ENCODE measurements at regions of chr16 and their contacts with region 1.

Region 1: GRCh38 chr16:30984669-30985400 is at the start of gene HSD3B7:
- DNase-seq: peak; percentile 96
- H3K4me3 ChIP-seq: peak within 1 kb of the TSS; percentile 30 to 53 (median 50)
- H3K27ac ChIP-seq: peak within 1 kb of the TSS; percentile 69 to 78 (median 72)
- H3K4me1 ChIP-seq: peaks cover 0 to 14% (median 12%) of the 10 kb centered on the region in 4 donors
- H3K27me3 ChIP-seq: no peaks in the 10 kb centered on the region
- CTCF ChIP-seq: peak; percentile 93 to 99 (median 96)
- EP300 ChIP-seq: no peak
- POLR2A ChIP-seq: no peak
- total RNA-seq, gene HSD3B7: 14.6 to 16.1 (median 15.5) TPM

Region 2: DNA sequence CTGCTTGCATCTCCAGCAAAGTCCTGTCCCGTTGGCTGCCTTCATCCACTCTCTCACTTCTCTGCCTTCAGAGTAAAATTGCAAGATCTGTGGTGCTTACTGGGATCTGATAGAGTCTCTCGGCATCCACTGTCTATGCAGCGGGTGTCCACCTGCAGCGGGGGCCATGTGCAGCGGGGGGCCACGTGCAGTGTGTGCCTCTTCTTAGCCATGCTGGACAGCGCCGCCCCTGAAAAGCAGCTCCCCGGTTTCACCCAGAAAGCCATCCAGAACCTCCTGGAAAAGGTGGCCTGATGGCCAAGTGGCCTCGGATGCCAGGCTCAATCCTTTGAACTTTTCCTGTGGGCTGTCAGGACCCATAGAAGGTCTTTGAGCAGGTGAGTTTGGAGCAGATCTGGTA is 58.0 kb after region 1 on chr16:
- intact Hi-C with region 1: loop called (anchors 1 kb)
- DNase-seq: no peak
- H3K4me3 ChIP-seq: no peak overlapping the region
- H3K27ac ChIP-seq: no peak overlapping the region
- H3K4me1 ChIP-seq: peaks cover 0 to 10% (median 4%) of the 10 kb centered on the region in 4 donors
- H3K27me3 ChIP-seq: no peaks in the 10 kb centered on the region
- CTCF ChIP-seq: no peak
- EP300 ChIP-seq: no peak
- POLR2A ChIP-seq: no peak

Region 3: GRCh38 chr16:31440516-31441184 is 455.8 kb after region 1 on chr16:
- intact Hi-C with region 1: loop called (anchors 1 kb)
- DNase-seq: peak; percentile 30
- H3K4me3 ChIP-seq: no peak overlapping the region
- H3K27ac ChIP-seq: no peak overlapping the region
- H3K4me1 ChIP-seq: peaks cover 0 to 12% (median 7%) of the 10 kb centered on the region in 4 donors
- H3K27me3 ChIP-seq: no peaks in the 10 kb centered on the region
- CTCF ChIP-seq: no peak
- EP300 ChIP-seq: no peak
- POLR2A ChIP-seq: no peak

Region 4: DNA sequence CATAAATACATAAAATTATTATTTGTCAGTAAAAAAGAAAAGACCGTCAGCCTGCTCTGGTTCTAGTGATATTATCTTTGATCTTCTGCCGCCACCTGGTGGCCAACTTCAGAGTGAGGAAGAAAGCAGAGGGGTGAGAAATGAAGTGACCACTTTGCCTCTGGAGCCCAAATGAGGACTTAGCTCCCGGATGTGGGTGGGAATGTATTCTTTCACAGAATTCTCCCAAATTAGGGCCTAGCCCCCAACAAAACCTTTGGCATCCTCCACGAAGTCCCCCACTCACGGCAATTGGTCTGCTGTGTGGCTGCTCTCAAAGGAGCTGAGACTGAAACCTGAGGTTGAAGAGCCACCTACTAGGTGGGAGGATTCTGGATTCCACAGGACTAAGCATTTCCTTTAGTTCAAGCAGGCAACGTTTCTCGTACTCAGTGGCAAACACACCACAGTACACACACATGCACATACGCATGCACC is 883.9 kb after region 1 on chr16:
- intact Hi-C with region 1: loop called (anchors 2 kb)
- DNase-seq: peak; percentile 85
- H3K4me3 ChIP-seq: no peak overlapping the region
- H3K27ac ChIP-seq: peak overlapping the region in 3 of 4 donors; percentile 6 to 44 (median 44)
- H3K4me1 ChIP-seq: peaks cover 0 to 5% (median 4%) of the 10 kb centered on the region in 4 donors
- H3K27me3 ChIP-seq: no peaks in the 10 kb centered on the region
- CTCF ChIP-seq: peak; percentile 46 to 88 (median 72)
- EP300 ChIP-seq: no peak
- POLR2A ChIP-seq: no peak

Measured in sigmoid colon (tissue), 7 donors.